Endothelial cell of umbilical vein (primary cell): ENCODE measurements at regions of chr15 and their contacts with region 1.

Region 1: DNA sequence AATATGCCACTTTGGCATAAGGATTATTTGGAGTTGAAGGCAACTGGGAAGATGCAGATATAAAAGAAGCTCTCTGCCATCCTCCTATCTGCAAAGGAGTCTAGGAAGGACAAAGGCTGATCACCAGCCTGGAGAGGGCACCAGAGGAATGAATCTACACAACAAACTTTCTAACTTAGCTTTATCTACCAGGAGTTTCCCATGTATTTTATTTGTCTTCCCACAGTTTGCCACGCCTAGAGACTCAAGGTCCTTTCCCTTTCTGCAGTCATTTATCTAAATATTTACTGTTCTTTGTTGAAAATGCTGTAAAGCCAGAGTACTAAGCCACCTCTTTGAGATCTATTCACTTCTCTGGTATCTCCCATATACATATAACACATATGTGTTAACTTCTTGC is 32.2 kb downstream of the GPR176 start:
- DNase-seq: peak; percentile 74
- H3K4me3 ChIP-seq: no peak overlapping the region
- H3K27ac ChIP-seq: no peak overlapping the region
- H3K4me1 ChIP-seq: peaks cover 9% of the 10 kb centered on the region
- H3K27me3 ChIP-seq: no peaks in the 10 kb centered on the region
- CTCF ChIP-seq: peak; percentile 19 to 44
- POLR2A ChIP-seq: no peak

Region 2: GRCh38 chr15:39543651-39544050 is 344.2 kb before region 1 on chr15:
- CTCF ChIA-PET with region 1: no interaction called
- POLR2A ChIA-PET with region 1: no interaction called
- dilution Hi-C with region 1: no loop called
- intact Hi-C with region 1: no loop called
- DNase-seq: no peak
- H3K4me3 ChIP-seq: no peak overlapping the region
- H3K27ac ChIP-seq: no peak overlapping the region
- H3K4me1 ChIP-seq: no peaks in the 10 kb centered on the region
- H3K27me3 ChIP-seq: no peaks in the 10 kb centered on the region
- CTCF ChIP-seq: no peak
- POLR2A ChIP-seq: no peak

Region 3: GRCh38 chr15:39914977-39915376 is 27.1 kb after region 1 on chr15:
- CTCF ChIA-PET with region 1: interaction called, 31 read pairs
- POLR2A ChIA-PET with region 1: no interaction called
- dilution Hi-C with region 1: no loop called
- intact Hi-C with region 1: loop called (anchors 5 kb)
- DNase-seq: no peak
- H3K4me3 ChIP-seq: no peak overlapping the region
- H3K27ac ChIP-seq: no peak overlapping the region
- H3K4me1 ChIP-seq: peaks cover 12% of the 10 kb centered on the region
- H3K27me3 ChIP-seq: no peaks in the 10 kb centered on the region
- CTCF ChIP-seq: no peak
- POLR2A ChIP-seq: no peak

Region 4: DNA sequence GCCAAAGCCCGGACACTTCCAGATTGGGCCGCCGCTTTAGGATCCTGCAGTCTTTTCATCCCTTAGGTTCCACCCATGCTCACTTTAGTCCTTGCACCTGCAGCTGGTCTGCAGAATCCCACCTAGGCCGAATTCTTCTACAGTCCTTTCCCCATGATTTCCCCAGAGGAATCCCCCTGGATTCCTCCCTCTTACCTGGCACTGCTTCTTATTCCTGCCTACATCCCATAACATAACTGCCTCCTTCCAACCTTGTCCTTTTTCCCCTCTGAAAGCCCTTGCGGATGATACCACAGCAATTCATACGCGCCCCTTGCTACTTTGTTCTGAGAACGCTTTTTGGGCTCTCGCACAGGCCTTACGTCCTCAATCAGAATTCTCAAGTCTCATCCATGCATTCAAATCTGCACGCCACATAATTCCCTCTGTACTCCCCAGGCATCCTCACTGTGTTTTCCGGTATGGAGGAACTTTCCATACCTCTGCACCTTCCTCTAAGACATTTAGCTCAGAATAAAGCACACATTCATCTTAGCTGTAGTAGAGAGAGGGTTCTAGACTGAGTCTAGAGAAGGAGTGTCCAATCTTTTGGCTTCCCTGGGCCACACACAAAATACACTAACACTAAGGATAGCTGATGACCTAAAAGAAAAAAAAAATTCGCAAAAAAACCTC is 46.7 kb after region 1 on chr15:
- CTCF ChIA-PET with region 1: interaction called, 34 read pairs
- POLR2A ChIA-PET with region 1: interaction called, 4 read pairs
- dilution Hi-C with region 1: no loop called
- intact Hi-C with region 1: no loop called
- DNase-seq: peak; percentile 47
- H3K4me3 ChIP-seq: peak overlapping the region; percentile 33 to 77 (median 57)
- H3K27ac ChIP-seq: peak overlapping the region; percentile 92
- H3K4me1 ChIP-seq: peaks cover 22% of the 10 kb centered on the region
- H3K27me3 ChIP-seq: no peaks in the 10 kb centered on the region
- CTCF ChIP-seq: no peak
- POLR2A ChIP-seq: no peak

Region 5: DNA sequence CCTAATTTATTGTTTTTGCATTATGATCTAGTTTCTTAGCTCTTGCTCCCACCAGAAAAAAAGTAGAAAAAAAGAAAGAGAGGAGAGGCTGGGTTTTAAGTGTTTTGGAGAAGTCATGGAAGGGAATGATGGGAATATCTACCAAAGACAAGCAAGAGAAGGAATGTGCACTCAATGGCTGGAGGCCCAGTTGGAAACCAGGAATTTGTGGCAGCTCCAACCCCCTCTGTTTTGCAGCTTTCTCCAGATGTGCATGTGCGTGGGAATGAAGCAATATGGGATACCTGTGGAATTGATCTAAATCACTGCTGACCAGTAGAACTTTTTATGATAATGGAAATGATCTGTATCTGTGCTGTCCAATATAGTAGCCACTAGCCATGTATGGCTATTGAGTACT is 73.2 kb after region 1 on chr15:
- CTCF ChIA-PET with region 1: interaction called, 10 read pairs
- POLR2A ChIA-PET with region 1: no interaction called
- dilution Hi-C with region 1: no loop called
- intact Hi-C with region 1: no loop called
- DNase-seq: no peak
- H3K4me3 ChIP-seq: no peak overlapping the region
- H3K27ac ChIP-seq: no peak overlapping the region
- H3K4me1 ChIP-seq: no peaks in the 10 kb centered on the region
- H3K27me3 ChIP-seq: no peaks in the 10 kb centered on the region
- CTCF ChIP-seq: no peak
- POLR2A ChIP-seq: no peak